ENCODE measurements at regions of chr17 and their contacts with region 1.

Region 1: DNA sequence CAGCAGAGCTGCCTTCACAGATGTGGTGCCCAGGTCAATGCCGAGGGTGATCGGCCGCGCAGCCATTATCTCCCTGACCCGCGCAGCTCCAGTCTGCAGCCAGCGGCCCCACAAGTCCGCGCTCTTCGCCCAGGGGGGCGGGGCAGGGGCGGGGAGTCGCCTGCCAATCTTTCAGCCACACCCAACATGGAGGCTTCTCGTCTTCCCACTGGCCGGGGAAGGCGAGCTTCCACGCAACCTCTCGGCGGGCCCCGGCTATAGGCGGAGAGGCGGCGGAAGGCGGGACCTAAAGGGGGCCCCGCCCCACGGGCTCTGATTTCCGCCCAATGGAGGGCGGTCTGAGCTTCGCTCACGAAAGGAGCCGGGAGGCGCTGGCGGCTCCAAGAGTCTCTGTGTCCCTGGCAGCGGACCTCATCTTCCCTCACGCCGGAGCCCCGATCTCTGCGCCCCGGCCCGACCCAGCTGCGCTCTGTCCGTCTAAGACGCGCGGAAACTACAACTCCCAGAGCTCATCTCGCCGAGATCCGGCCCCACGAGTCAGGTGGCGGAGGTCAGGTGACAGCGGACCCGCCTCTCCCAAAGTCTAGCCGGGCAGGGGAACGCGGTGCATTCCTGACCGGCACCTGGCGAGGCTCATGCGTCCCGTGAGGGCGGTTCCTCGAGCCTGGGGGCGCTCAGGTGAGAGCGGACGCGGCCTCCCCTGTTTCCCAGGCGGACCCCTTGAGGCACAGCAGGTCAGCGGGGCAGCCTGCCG is at the starts of genes CTNS and SHPK:
- DNase-seq: peak; percentile 99
- H3K4me3 Mint-ChIP-seq: peak within 1 kb of the TSS; percentile 98
- H3K27ac Mint-ChIP-seq: peak within 1 kb of the TSS; percentile 99
- H3K4me1 Mint-ChIP-seq: peaks cover 43% of the 10 kb centered on the region
- H3K27me3 Mint-ChIP-seq: no peaks in the 10 kb centered on the region
- total RNA-seq, gene CTNS: 46.7 and 48.1 TPM in 2 replicates
- total RNA-seq, gene SHPK: 20.6 and 21.2 TPM in 2 replicates

Region 2: DNA sequence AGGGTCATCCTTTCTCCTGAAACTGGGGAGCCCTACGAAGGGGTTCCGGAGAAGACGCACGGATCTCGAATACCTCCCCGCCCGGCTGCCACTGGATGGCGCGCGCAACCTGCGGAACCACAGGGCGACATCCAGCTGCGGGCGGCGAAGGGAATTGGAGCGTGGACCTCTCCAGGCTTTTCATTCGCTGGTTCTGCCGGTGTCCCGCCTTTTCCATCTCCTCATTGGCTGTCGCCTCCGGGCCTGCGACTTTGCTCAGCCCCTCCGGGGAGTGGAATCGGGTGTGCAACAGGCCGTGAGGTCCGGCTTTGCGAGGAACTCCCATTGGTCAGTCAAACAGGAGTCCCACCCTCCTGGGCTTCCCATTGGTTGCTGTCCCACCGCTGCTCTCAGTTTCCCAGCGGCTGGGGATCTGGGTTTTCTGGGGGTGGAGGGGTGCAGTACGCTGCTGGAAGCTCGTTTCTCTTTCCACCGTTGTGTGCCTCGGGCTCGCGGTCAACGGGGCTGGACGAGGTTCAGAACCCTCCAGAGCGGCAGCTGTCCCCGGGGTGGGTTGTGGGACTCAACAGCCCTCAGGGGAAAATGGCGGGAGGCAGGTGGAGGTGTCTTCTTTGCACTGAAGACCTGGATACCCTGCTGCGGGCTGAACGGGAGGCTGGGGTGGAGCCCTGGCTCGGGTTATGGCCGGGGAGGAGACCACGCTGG is 587.4 kb before region 1 on chr17:
- intact Hi-C with region 1: loop called (anchors 10 kb)
- DNase-seq: peak; percentile 97
- H3K4me3 Mint-ChIP-seq: peak overlapping the region; percentile 97
- H3K27ac Mint-ChIP-seq: peak overlapping the region; percentile 86
- H3K4me1 Mint-ChIP-seq: peaks cover 6% of the 10 kb centered on the region
- H3K27me3 Mint-ChIP-seq: peaks cover 3% of the 10 kb centered on the region

Region 3: GRCh38 chr17:3668279-3669085 is 32.2 kb after region 1 on chr17 and contains the starts of genes EMC6 and TAX1BP3:
- intact Hi-C with region 1: loop called (anchors 1 kb)
- DNase-seq: peak; percentile 100
- H3K4me3 Mint-ChIP-seq: peak within 1 kb of the TSS; percentile 92
- H3K27ac Mint-ChIP-seq: peak within 1 kb of the TSS; percentile 93
- H3K4me1 Mint-ChIP-seq: peaks cover 25% of the 10 kb centered on the region
- H3K27me3 Mint-ChIP-seq: no peaks in the 10 kb centered on the region
- total RNA-seq, gene EMC6: 69.4 and 70.5 TPM in 2 replicates
- total RNA-seq, gene TAX1BP3: 28.7 and 29.0 TPM in 2 replicates

Measured in activated CD4-positive, alpha-beta T cell treated with anti-CD3 and anti-CD28 coated beads, Interleukin-2, amount 10 ng/mL, durations not matched to agents 24 days and 14 days (primary cell).